Psoas muscle (tissue), 8 donors: ENCODE measurements at regions of chr6 and their contacts with region 1.

Region 1: DNA sequence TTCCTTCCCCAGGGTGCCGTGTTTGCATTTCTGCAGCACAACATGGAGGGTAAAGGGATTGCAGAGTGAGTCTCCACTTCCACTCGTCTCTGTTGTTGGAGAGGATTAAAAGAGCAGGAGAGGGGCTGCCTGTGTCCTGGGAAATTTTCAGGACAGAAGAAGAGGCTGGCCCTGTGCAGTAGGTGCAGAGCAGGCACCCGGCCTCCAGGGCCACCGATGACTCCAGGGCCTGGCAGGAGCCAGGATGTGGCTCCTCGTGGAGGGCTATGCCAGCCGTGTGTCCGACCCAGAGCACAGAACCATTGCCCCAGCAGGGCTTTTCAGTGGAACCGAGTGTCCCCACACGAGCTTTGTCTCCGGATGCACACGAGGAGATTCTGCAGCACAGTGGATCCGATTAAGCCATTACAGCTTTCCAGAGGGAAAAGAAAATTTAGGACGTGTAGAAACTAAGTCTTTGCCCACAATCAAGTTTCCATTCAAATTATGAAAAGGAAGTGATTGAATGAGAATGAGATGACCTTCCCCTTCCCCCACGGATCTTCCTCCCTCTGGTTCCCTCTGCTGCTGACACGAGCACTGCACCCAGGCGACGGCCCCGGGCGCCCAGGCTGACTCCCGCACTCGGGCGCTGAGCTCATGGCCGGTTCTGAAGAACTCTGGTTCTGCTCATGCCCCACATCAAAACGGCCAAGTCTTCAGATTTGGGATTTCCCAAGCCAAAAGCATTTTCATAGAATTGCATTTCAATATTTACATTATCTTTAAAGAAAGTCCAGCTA is 43.1 kb upstream of the UNC93A start:
- DNase-seq: no peak
- ATAC-seq: no peak
- H3K4me3 ChIP-seq: no peak overlapping the region
- H3K27ac ChIP-seq: no peak overlapping the region
- H3K4me1 ChIP-seq: no peaks in the 10 kb centered on the region
- H3K27me3 ChIP-seq: peaks cover 0 to 11% (median 0%) of the 10 kb centered on the region in 3 donors
- CTCF ChIP-seq: no peak

Region 2: GRCh38 chr6:167153521-167153959 is 94.5 kb before region 1 on chr6:
- intact Hi-C with region 1: no loop called
- DNase-seq: no peak
- ATAC-seq: no peak
- H3K4me3 ChIP-seq: peak overlapping the region; percentile 24
- H3K27ac ChIP-seq: no peak overlapping the region
- H3K4me1 ChIP-seq: no peaks in the 10 kb centered on the region
- H3K27me3 ChIP-seq: peaks cover 0 to 14% (median 4%) of the 10 kb centered on the region in 3 donors
- CTCF ChIP-seq: no peak

Region 3: DNA sequence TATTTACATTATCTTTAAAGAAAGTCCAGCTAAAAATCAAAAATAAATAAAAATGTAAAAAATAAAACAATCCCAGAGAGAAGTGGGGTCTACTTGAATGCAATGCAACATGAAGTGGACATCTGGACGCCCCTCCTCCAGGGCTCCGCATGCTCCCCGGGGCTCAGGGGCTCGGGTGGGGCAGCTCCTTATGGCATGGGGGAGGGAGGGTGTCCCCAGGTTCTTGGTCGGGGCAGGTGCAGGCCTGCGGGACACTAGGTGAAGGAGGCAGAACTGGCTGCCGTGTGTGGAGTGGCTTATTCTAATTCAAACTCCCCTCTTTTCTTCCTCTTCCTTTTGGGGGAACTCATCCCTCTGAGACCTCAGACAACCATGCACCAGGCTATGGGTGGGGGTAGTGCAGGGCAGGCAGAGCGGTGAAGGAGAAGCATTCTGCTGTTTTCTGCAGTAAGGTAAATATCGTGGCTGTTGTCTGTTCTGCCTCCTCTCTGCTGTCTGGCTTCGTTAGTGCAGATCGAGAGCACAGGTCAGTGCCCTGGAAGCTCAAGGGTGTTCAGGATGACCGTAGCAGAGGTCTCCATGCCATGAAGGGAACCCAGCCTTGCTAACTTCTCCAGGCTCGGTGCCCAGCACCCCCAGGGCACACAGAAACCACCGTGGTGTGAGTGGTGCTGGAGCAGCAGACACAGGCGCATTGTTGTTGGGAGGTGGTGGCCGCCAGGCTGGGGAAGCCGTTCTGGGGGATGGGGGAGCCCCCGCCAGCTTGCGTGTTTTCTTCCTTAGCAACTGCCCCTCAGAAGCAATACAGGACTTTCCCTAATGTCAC is 159.4 kb after region 1 on chr6:
- intact Hi-C with region 1: loop called in 1 of 2 experiments (anchors 2 kb)
- DNase-seq: no peak
- ATAC-seq: no peak
- H3K4me3 ChIP-seq: no peak overlapping the region
- H3K27ac ChIP-seq: no peak overlapping the region
- H3K4me1 ChIP-seq: no peaks in the 10 kb centered on the region
- H3K27me3 ChIP-seq: peaks cover 0 to 4% (median 0%) of the 10 kb centered on the region in 3 donors
- CTCF ChIP-seq: no peak